Activated T-helper 2 cell treated with anti-CD3 and anti-CD28 coated beads, Interferon-gamma antibody, Interleukin-2, Interleukin-4, amounts not matched to agents 10 μg/mL and 5 μg/mL and 100 μg/mL, durations not matched to agents 14 hours and 24 hours and 36 hours (primary cell): ENCODE measurements at regions of chr20 and their contacts with region 1.

Region 1: DNA sequence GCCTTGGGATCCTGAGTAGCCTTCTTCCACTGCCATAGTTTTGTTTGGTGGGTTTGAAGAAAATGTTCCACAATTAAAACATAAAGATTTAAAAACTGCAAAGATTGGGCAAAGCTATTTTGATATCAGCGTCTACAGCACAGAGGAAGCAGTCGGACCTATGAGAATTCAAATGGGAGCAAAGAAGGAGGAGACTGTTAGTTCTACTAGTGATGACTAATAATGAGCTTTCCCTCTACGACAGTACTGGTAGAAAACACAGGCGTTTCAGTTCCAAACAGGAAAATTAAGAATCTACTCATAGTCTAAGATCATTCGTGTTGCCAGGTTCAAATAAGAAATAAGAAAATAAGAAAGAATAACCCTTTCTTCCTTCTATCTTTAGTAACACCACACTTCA is 121.2 kb downstream of the INSM1 start:
- DNase-seq: no peak
- H3K4me3 Mint-ChIP-seq: peak overlapping the region; percentile 79
- H3K27ac Mint-ChIP-seq: peak overlapping the region; percentile 97
- H3K4me1 Mint-ChIP-seq: peaks cover 57% of the 10 kb centered on the region
- H3K27me3 Mint-ChIP-seq: no peaks in the 10 kb centered on the region

Region 2: DNA sequence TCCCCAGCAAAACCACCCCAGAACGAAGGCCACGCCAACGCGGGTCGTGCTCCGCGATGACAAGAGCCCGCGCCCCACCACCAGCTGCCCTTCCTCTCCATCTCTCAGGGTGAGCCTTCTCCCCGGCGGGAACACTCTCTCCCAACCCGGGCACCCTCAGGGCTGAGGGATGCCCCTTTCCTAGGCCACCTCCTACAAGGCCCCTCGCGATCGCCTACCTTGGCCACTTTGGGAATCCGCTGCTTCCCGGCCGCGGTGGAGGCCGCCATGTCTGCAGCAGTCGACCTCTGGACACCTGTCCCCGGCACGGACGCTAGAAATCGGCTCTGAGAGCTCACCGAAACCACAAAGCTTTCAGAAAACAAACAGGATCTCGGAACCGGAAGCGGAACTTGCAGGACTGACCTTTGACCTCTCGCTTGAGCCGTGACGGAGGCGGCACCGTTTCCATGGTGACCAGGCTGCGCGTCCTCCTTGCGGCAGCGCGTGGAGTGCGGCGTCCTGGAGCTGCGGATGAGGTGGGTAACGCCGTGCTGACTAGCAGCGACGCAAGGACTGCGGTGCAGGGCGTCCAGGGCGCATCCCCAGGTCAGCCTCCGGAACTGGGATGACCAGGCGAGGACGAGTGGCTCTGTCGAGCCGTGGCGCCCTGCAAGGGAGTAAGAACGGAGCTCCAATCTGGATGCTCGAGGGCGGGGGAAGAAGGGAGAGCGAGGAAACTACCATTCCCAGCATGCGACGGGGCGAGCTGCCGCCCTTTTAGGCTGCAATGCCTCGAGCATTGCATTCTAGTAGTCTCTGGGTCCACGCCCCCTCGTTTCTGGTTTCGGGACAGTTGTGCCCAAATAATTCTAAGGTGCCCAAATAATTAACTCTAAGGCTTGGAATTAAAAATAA is 436.7 kb before region 1 on chr20 and contains the starts of genes CFAP61 and CRNKL1:
- intact Hi-C with region 1: loop called (anchors 5 kb)
- DNase-seq: peak; percentile 96
- H3K4me3 Mint-ChIP-seq: peak within 1 kb of the TSS; percentile 96
- H3K27ac Mint-ChIP-seq: peak within 1 kb of the TSS; percentile 90
- H3K4me1 Mint-ChIP-seq: peaks cover 9% of the 10 kb centered on the region
- H3K27me3 Mint-ChIP-seq: peaks cover 4% of the 10 kb centered on the region
- total RNA-seq, gene CFAP61: 0.32 TPM in 1 of 2 replicates, not detected in the other
- total RNA-seq, gene CRNKL1: 19.3 and 20.1 TPM in 2 replicates

Region 3: GRCh38 chr20:20410678-20411077 is 78.4 kb before region 1 on chr20:
- intact Hi-C with region 1: loop called (anchors 1 kb)
- DNase-seq: no peak
- H3K4me3 Mint-ChIP-seq: peak overlapping the region; percentile 68
- H3K27ac Mint-ChIP-seq: peak overlapping the region; percentile 72
- H3K4me1 Mint-ChIP-seq: peaks cover 47% of the 10 kb centered on the region
- H3K27me3 Mint-ChIP-seq: no peaks in the 10 kb centered on the region

Region 4: GRCh38 chr20:20452254-20452676 is 36.8 kb before region 1 on chr20:
- intact Hi-C with region 1: loop called (anchors 1 kb)
- DNase-seq: peak; percentile 39
- H3K4me3 Mint-ChIP-seq: peak overlapping the region; percentile 82
- H3K27ac Mint-ChIP-seq: peak overlapping the region; percentile 82
- H3K4me1 Mint-ChIP-seq: peaks cover 43% of the 10 kb centered on the region
- H3K27me3 Mint-ChIP-seq: no peaks in the 10 kb centered on the region

Region 5: DNA sequence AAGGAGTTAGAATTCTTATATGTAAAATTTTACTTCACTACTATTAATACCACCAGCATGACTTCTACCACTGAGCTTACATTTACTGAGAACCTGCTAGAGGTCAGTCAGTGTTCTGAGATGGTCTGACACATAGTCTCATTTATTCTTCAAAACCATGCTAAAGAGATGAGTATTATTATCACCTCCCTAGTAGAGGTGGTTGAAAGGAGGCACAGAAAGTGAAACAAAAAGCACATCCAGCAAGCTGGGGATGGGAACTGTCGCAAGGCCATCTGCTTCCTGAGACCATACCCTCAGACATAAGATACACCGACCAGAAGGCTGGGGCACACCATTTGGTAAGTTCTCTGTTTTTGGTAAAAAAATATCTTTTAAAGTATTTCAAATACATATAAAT is 16.5 kb after region 1 on chr20:
- intact Hi-C with region 1: loop called (anchors 2 kb)
- DNase-seq: no peak
- H3K4me3 Mint-ChIP-seq: no peak overlapping the region
- H3K27ac Mint-ChIP-seq: no peak overlapping the region
- H3K4me1 Mint-ChIP-seq: peaks cover 30% of the 10 kb centered on the region
- H3K27me3 Mint-ChIP-seq: no peaks in the 10 kb centered on the region

Region 6: GRCh38 chr20:20802328-20802727 is 313.3 kb after region 1 on chr20:
- intact Hi-C with region 1: no loop called
- DNase-seq: no peak
- H3K4me3 Mint-ChIP-seq: no peak overlapping the region
- H3K27ac Mint-ChIP-seq: no peak overlapping the region
- H3K4me1 Mint-ChIP-seq: no peaks in the 10 kb centered on the region
- H3K27me3 Mint-ChIP-seq: no peaks in the 10 kb centered on the region